K562 (cell line): ENCODE measurements at regions of chr2 and their contacts with region 1.

Region 1: DNA sequence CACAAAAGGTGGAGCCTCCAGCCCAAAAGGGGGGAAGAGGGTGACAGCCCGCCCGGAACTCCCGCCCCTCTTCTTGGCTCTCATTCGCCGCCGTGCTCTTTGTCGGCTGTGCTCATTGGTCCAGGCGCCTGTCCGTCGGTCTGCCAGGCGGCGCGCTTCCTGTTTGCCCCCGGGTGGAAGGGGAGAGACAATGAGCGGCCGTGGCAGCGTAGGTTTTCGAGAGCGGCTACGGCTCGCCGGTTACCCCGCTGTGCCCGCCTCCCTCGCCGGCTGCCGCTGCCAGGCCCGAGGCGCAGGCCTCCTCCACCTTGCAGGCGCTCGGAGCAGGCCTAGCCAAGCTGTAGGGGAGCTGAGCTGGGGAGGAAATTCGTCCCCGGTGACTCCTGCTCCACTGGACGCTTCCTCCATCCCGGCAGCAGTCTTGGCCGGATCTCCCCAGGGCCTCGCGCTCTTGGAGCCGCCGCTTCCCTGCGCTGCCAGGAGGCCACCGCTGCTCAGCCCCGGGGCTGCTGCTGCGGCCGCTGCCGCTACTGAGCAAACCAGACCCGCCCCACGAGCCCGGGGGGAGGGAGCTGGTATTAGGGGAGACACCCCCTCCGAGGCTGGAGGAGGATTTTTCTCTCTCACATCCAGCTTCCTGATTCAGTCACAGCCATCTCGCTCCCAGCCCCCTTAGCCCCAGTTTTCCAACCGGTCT is at the start of gene SP3:
- DNase-seq: peak; percentile 98 to 99 (median 99)
- ATAC-seq: peak; percentile 88
- H3K4me3 ChIP-seq: peak within 1 kb of the TSS; percentile 97
- H3K27ac ChIP-seq: peak within 1 kb of the TSS; percentile 96
- H3K4me1 ChIP-seq: peaks cover 8 to 22% of the 10 kb centered on the region in 2 experiments; a peak in 4 of 5 replicates
- H3K27me3 ChIP-seq: no peaks in the 10 kb centered on the region
- CTCF ChIP-seq: no peak
- EP300 ChIP-seq: 0 out of 2 replicates have a peak, but pooled peaks have one; percentile 2
- POLR2A ChIP-seq: peak; percentile 93
- RAD21 ChIP-seq: peak in 1 of 2 experiments; percentile 24; a peak in 2 of 4 replicates
- polyA plus RNA-seq, gene SP3: 12.0 to 13.1 TPM

Region 2: DNA sequence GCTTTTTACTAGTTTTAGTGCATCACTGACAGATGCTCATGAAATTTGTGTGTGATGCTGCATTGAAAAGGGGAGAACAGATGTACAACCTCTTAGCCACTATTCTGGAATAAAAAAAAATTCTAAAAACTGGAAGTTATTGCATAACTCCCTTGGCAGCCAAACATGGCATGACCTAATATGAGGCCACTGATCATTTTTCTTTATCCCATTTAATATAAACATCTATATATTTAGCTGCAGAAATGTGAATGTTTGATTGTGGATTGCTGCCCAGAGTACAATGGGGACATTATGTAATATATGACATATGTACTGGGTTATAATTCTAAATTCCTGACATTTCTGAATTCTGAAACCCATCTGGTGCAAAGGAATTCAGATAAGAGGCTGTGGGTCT is 524.3 kb before region 1 on chr2:
- CTCF ChIA-PET with region 1: no interaction called
- POLR2A ChIA-PET with region 1: no interaction called
- in situ Hi-C with region 1: no loop called
- intact Hi-C with region 1: no loop called
- DNase-seq: no peak
- ATAC-seq: no peak
- H3K4me3 ChIP-seq: no peak overlapping the region
- H3K27ac ChIP-seq: no peak overlapping the region
- H3K4me1 ChIP-seq: no peaks in the 10 kb centered on the region
- H3K27me3 ChIP-seq: peaks cover 5 to 19% of the 10 kb centered on the region in 2 experiments; a peak in 3 of 5 replicates
- CTCF ChIP-seq: no peak
- EP300 ChIP-seq: no peak
- POLR2A ChIP-seq: no peak
- RAD21 ChIP-seq: no peak

Region 3: GRCh38 chr2:173892341-173892740 is 73.1 kb before region 1 on chr2:
- CTCF ChIA-PET with region 1: no interaction called
- POLR2A ChIA-PET with region 1: no interaction called
- in situ Hi-C with region 1: no loop called
- intact Hi-C with region 1: loop called (anchors 1 kb)
- DNase-seq: no peak
- ATAC-seq: no peak
- H3K4me3 ChIP-seq: no peak overlapping the region
- H3K27ac ChIP-seq: no peak overlapping the region
- H3K4me1 ChIP-seq: peaks cover 0 to 16% of the 10 kb centered on the region in 2 experiments; a peak in 2 of 5 replicates
- H3K27me3 ChIP-seq: no peaks in the 10 kb centered on the region
- CTCF ChIP-seq: no peak
- EP300 ChIP-seq: no peak
- POLR2A ChIP-seq: no peak
- RAD21 ChIP-seq: no peak

Region 4: GRCh38 chr2:174039551-174040416 is 74.3 kb after region 1 on chr2:
- CTCF ChIA-PET with region 1: no interaction called
- POLR2A ChIA-PET with region 1: no interaction called
- in situ Hi-C with region 1: no loop called
- intact Hi-C with region 1: loop called (anchors 5 kb)
- DNase-seq: peak; percentile 88 to 95 (median 89)
- ATAC-seq: peak; percentile 93
- H3K4me3 ChIP-seq: no peak overlapping the region
- H3K27ac ChIP-seq: peak overlapping the region; percentile 76
- H3K4me1 ChIP-seq: peaks cover 3 to 10% of the 10 kb centered on the region in 2 experiments; a peak in 4 of 5 replicates
- H3K27me3 ChIP-seq: no peaks in the 10 kb centered on the region; a peak in 2 of 5 replicates
- CTCF ChIP-seq: peak; percentile 96 to 97 (median 97)
- EP300 ChIP-seq: peak; percentile 63
- POLR2A ChIP-seq: no peak
- RAD21 ChIP-seq: peak; percentile 79 to 84

Region 5: DNA sequence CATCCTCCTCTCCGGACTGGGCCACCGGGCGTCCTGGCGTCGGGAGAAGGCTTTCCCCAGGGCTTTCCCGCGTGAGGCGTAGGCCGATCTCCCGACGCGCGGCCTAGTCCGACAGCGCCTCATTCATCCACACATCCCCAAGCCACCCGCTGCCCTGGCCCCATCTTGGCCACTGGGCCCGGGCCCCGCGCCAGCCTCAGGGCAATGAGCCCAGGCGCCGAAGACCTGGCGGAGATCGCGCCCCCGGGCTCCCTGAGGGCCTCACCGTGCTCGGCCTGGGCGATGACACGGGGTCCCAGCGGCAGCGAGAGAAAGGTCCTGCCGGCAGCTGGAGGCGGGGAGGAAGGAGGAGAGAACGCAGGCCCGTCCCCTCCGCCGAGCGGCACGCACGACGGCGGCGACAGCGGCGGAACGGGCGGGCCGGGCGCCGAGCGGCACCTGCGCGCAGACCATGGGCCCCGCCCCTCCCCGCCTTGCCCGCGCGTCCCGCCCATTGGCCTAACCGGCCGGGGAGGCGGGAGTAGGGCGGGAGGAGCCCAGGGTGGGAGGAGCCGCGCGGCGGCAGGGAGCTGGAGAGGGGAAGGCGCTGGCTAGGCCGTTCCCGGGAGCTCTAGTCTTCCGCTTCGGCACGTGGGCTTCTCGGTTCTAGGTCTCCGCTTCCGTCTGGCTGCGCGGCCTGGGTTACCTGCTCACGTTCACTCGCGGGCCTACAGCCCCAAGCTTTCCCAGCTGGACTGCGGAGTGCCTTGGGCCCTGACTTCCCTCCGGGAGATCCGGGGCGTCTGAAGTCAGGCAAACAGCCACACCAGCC is 282.9 kb after region 1 on chr2 and contains the start of gene OLA1:
- CTCF ChIA-PET with region 1: no interaction called
- POLR2A ChIA-PET with region 1: no interaction called
- in situ Hi-C with region 1: no loop called
- intact Hi-C with region 1: loop called (anchors 10 kb)
- DNase-seq: peak; percentile 98 to 99 (median 99)
- ATAC-seq: peak; percentile 96
- H3K4me3 ChIP-seq: peak within 1 kb of the TSS; percentile 87
- H3K27ac ChIP-seq: peak within 1 kb of the TSS; percentile 90
- H3K4me1 ChIP-seq: peaks cover 5 to 14% of the 10 kb centered on the region in 2 experiments; a peak in 4 of 5 replicates
- H3K27me3 ChIP-seq: no peaks in the 10 kb centered on the region
- CTCF ChIP-seq: no peak
- EP300 ChIP-seq: no peak; the same call in 1 of the 2 replicates
- POLR2A ChIP-seq: peak; percentile 98
- RAD21 ChIP-seq: no peak
- polyA plus RNA-seq, gene OLA1: 208 to 222 TPM